ENCODE measurements at regions of chr7 and their contacts with region 1.

Region 1: GRCh38 chr7:98760201-98760651 is 109.6 kb downstream of the TMEM130 start:
- DNase-seq: no peak
- ATAC-seq: no peak
- H3K4me3 ChIP-seq: no peak overlapping the region
- H3K27ac ChIP-seq: no peak overlapping the region
- H3K4me1 ChIP-seq: no peaks in the 10 kb centered on the region
- H3K27me3 ChIP-seq: no peaks in the 10 kb centered on the region
- CTCF ChIP-seq: no peak

Region 2: GRCh38 chr7:98826387-98827231 is 66.4 kb after region 1 on chr7:
- CTCF ChIA-PET with region 1: no interaction called
- POLR2A ChIA-PET with region 1: no interaction called
- in situ Hi-C with region 1: no loop called
- intact Hi-C with region 1: loop called (anchors 10 kb)
- DNase-seq: no peak
- ATAC-seq: peak; percentile 74
- H3K4me3 ChIP-seq: no peak overlapping the region
- H3K27ac ChIP-seq: no peak overlapping the region
- H3K4me1 ChIP-seq: peaks cover 3% of the 10 kb centered on the region; the same call in 1 of the 2 replicates
- H3K27me3 ChIP-seq: no peaks in the 10 kb centered on the region
- CTCF ChIP-seq: no peak

Region 3: DNA sequence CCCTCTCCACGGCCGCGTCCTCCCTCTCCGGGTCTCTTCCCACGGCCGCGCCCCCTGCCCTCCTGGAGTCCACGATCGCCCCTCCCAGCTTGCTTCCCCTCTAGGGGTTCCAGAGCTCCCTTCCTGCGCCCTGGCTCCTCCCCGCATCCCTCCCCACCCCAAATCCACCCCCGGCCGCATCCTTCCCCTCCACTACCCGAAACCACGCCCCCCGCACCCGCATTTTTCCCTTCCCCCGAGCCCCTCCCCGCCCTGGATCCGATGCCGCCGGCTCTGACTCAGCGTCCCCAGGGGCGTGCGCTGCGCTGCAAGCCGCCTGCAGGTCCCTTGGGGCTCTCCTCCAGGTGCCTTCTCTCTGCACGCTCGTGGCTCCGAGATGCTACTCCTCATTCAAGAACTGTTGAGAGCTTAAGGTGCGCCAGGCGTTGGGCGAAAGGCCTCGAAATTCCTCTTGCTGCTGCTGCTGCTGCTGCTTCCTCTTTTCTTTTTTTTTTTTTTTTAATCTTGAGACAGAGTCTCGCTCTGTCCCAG is 110.0 kb after region 1 on chr7:
- CTCF ChIA-PET with region 1: no interaction called
- POLR2A ChIA-PET with region 1: no interaction called
- in situ Hi-C with region 1: no loop called
- intact Hi-C with region 1: no loop called
- DNase-seq: no peak
- ATAC-seq: peak; percentile 29; the same call in 1 of the 2 replicates
- H3K4me3 ChIP-seq: peak overlapping the region; percentile 27 to 32
- H3K27ac ChIP-seq: no peak overlapping the region
- H3K4me1 ChIP-seq: no peaks in the 10 kb centered on the region
- H3K27me3 ChIP-seq: peaks cover 7% of the 10 kb centered on the region
- CTCF ChIP-seq: no peak

Measured in Panc1 (cell line).